CD8-positive, alpha-beta memory T cell (primary cell): ENCODE measurements at regions of chr17 and their contacts with region 1.

Region 1: DNA sequence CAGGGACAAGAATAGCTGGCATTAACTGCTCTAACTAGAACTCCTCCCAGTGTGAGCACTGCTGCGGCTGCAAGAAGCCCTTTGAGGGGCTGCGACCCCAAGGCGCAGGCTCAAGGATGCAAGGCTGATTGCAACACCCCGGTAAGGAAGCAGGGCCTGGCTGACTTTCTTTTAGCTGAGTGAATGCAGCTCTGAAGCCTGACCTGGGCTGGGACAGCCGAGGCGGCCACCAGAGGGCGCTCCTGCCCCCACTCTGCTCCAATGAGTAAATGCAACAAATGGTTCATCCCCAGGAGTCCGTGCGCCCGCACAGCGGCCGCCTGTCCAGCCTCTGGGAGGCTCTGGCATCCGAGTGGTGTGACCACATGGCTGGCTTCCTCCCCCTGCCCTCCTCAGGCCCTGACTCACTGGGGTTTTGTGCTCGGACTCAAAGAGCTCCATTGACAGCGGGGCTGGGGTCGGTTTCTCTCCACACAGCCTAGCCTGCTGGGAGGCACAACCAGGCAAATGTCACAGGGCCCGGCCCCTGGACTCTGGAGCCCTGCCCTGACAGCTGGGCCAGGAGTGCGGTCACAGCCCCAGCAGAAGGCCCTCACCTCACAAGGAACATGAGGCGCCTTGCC is at the start of gene SMIM5:
- DNase-seq: peak; percentile 61 to 84 (median 74)
- H3K4me3 ChIP-seq: no peak within 1 kb of the TSS
- H3K4me3 Mint-ChIP-seq: no peak within 1 kb of the TSS
- H3K27ac ChIP-seq: no peak within 1 kb of the TSS
- H3K27ac Mint-ChIP-seq: peak within 1 kb of the TSS in 2 of 8 donors; percentile 4 to 63
- H3K4me1 ChIP-seq: peaks cover 14% of the 10 kb centered on the region
- H3K4me1 Mint-ChIP-seq: peaks cover 2 to 13% (median 4%) of the 10 kb centered on the region in 3 donors
- H3K27me3 ChIP-seq: no peaks in the 10 kb centered on the region
- H3K27me3 Mint-ChIP-seq: no peaks in the 10 kb centered on the region
- total RNA-seq, gene SMIM5: 0.20 TPM in 1 of 2 experiments, not detected in the other

Region 2: GRCh38 chr17:75645889-75646637 is 13.1 kb after region 1 on chr17:
- CTCF ChIA-PET with region 1: interaction called, 12 read pairs
- POLR2A ChIA-PET with region 1: no interaction called
- DNase-seq: peak in 1 of 5 donors; percentile 37
- H3K4me3 ChIP-seq: no peak overlapping the region
- H3K4me3 Mint-ChIP-seq: peak overlapping the region in 1 of 7 donors; percentile 5
- H3K27ac ChIP-seq: no peak overlapping the region
- H3K27ac Mint-ChIP-seq: peak overlapping the region in 6 of 8 donors; percentile 29 to 73 (median 49)
- H3K4me1 ChIP-seq: no peaks in the 10 kb centered on the region
- H3K4me1 Mint-ChIP-seq: peaks cover 2 to 13% (median 3%) of the 10 kb centered on the region in 3 donors
- H3K27me3 ChIP-seq: no peaks in the 10 kb centered on the region
- H3K27me3 Mint-ChIP-seq: peaks cover 0 to 2% of the 10 kb centered on the region in 2 donors

Region 3: DNA sequence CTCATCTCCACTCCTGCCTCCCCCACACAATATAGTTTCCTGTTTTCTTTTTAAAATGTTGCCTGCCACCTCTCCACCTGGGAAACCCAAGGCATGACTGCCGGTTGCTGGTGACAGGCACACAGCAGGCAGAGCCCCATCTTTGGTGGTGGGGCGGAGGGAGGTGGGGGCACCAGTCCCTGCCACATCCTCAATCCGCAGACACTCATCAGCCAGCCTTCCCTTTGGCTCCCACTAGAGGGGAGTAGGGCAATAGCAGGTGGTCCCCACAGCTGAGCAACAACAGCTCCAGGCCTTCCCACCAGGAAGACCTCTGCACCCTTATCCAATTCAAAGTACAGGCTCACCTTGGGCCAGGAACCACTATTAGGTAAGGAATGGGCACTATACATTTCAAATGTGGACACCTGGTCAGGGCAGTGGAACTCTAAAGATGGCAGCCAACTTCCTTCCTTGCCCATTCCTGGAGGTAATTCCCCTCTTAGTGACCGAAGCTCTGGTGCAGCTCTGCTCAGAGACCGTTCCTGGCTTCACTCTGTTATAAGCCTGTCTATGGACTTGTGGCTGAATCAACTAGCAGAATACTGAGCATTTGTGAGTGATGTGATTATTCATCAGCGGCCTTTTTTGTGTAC is 20.1 kb after region 1 on chr17:
- CTCF ChIA-PET with region 1: interaction called, 11 read pairs
- POLR2A ChIA-PET with region 1: no interaction called
- DNase-seq: peak in 2 of 5 donors; percentile 10 to 36
- H3K4me3 ChIP-seq: no peak overlapping the region
- H3K4me3 Mint-ChIP-seq: no peak overlapping the region
- H3K27ac ChIP-seq: no peak overlapping the region
- H3K27ac Mint-ChIP-seq: peak overlapping the region in 1 of 8 donors; percentile 68
- H3K4me1 ChIP-seq: no peaks in the 10 kb centered on the region
- H3K4me1 Mint-ChIP-seq: peaks cover 0 to 7% (median 4%) of the 10 kb centered on the region in 3 donors
- H3K27me3 ChIP-seq: no peaks in the 10 kb centered on the region
- H3K27me3 Mint-ChIP-seq: peaks cover 0 to 2% of the 10 kb centered on the region in 2 donors

Region 4: GRCh38 chr17:75698659-75699058 is 65.7 kb after region 1 on chr17:
- CTCF ChIA-PET with region 1: no interaction called
- POLR2A ChIA-PET with region 1: no interaction called
- DNase-seq: no peak
- H3K4me3 ChIP-seq: no peak overlapping the region
- H3K4me3 Mint-ChIP-seq: no peak overlapping the region
- H3K27ac ChIP-seq: no peak overlapping the region
- H3K27ac Mint-ChIP-seq: peak overlapping the region in 1 of 8 donors; percentile 40
- H3K4me1 ChIP-seq: no peaks in the 10 kb centered on the region
- H3K4me1 Mint-ChIP-seq: peaks cover 3 to 6% (median 4%) of the 10 kb centered on the region in 3 donors
- H3K27me3 ChIP-seq: no peaks in the 10 kb centered on the region
- H3K27me3 Mint-ChIP-seq: no peaks in the 10 kb centered on the region

Region 5: GRCh38 chr17:75720725-75721462 is 87.9 kb after region 1 on chr17 and contains the start of gene ITGB4:
- CTCF ChIA-PET with region 1: interaction called, 10 read pairs
- POLR2A ChIA-PET with region 1: no interaction called
- DNase-seq: peak; percentile 58 to 77 (median 66)
- H3K4me3 ChIP-seq: peak within 1 kb of the TSS; percentile 56
- H3K4me3 Mint-ChIP-seq: peak within 1 kb of the TSS; percentile 73 to 85 (median 78)
- H3K27ac ChIP-seq: no peak within 1 kb of the TSS
- H3K27ac Mint-ChIP-seq: peak within 1 kb of the TSS in 4 of 8 donors; percentile 47 to 73 (median 62)
- H3K4me1 ChIP-seq: no peaks in the 10 kb centered on the region
- H3K4me1 Mint-ChIP-seq: peaks cover 4 to 5% (median 4%) of the 10 kb centered on the region in 3 donors
- H3K27me3 ChIP-seq: peaks cover 4% of the 10 kb centered on the region
- H3K27me3 Mint-ChIP-seq: peaks cover 4 to 11% of the 10 kb centered on the region in 2 donors
- total RNA-seq, gene ITGB4: 1.8 to 2.1 TPM

Region 6: DNA sequence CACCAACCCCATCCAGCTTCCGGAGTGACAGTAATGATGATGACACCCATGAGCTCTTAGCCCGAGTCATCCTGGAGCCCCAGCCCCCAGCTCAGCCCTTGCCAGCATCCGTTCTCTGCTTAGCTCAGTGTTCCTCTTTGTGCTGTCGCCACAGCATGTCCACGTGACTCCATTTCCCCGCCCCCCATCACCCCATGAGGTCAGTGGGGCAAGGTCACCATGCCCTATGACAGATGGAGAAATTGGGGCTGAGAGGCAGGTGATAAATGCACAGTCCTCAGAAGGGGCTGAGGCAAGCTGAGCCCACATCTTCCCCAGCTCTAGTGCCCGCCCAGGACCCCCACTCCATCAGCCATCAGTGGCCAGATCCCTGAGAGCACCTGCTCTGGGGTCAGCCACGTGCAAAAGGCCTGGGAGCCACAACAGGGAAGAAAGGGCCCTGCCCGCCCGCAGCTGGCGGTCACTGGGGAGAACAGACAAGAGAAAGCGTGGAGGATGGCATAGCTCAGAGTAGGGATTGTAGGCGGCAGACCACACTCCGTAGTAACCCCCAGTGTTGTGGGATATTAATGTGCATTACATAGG is 105.3 kb after region 1 on chr17:
- CTCF ChIA-PET with region 1: interaction called, 11 read pairs
- POLR2A ChIA-PET with region 1: no interaction called
- DNase-seq: no peak
- H3K4me3 ChIP-seq: no peak overlapping the region
- H3K4me3 Mint-ChIP-seq: no peak overlapping the region
- H3K27ac ChIP-seq: no peak overlapping the region
- H3K27ac Mint-ChIP-seq: peak overlapping the region in 1 of 8 donors; percentile 77
- H3K4me1 ChIP-seq: no peaks in the 10 kb centered on the region
- H3K4me1 Mint-ChIP-seq: peaks cover 4 to 8% (median 4%) of the 10 kb centered on the region in 3 donors
- H3K27me3 ChIP-seq: no peaks in the 10 kb centered on the region
- H3K27me3 Mint-ChIP-seq: no peaks in the 10 kb centered on the region